CD14-positive monocyte (primary cell): ENCODE measurements at regions of chr1 and their contacts with region 1.

Region 1: GRCh38 chr1:17427696-17428660 is 11.5 kb downstream of the RCC2 start:
- DNase-seq: no peak
- H3K4me3 ChIP-seq: no peak overlapping the region
- H3K4me3 Mint-ChIP-seq: no peak overlapping the region
- H3K27ac ChIP-seq: peak overlapping the region in 1 of 2 donors; percentile 23
- H3K27ac Mint-ChIP-seq: peak overlapping the region in 2 of 7 donors; percentile 30 to 83
- H3K4me1 ChIP-seq: peaks cover 18 to 23% of the 10 kb centered on the region in 2 donors
- H3K4me1 Mint-ChIP-seq: peaks cover 24% of the 10 kb centered on the region
- H3K27me3 ChIP-seq: no peaks in the 10 kb centered on the region
- H3K27me3 Mint-ChIP-seq: no peaks in the 10 kb centered on the region
- CTCF ChIP-seq: no peak

Region 2: GRCh38 chr1:17480846-17481245 is 52.9 kb after region 1 on chr1:
- intact Hi-C with region 1: loop called in 1 of 2 experiments (anchors 5 kb)
- DNase-seq: no peak
- H3K4me3 ChIP-seq: no peak overlapping the region
- H3K4me3 Mint-ChIP-seq: no peak overlapping the region
- H3K27ac ChIP-seq: no peak overlapping the region
- H3K27ac Mint-ChIP-seq: no peak overlapping the region
- H3K4me1 ChIP-seq: no peaks in the 10 kb centered on the region
- H3K4me1 Mint-ChIP-seq: peaks cover 6% of the 10 kb centered on the region
- H3K27me3 ChIP-seq: no peaks in the 10 kb centered on the region
- H3K27me3 Mint-ChIP-seq: peaks cover 9 to 19% (median 12%) of the 10 kb centered on the region in 3 donors
- CTCF ChIP-seq: no peak